Lower leg skin (tissue), 4 donors: ENCODE measurements at regions of chr12 and their contacts with region 1.

Region 1: DNA sequence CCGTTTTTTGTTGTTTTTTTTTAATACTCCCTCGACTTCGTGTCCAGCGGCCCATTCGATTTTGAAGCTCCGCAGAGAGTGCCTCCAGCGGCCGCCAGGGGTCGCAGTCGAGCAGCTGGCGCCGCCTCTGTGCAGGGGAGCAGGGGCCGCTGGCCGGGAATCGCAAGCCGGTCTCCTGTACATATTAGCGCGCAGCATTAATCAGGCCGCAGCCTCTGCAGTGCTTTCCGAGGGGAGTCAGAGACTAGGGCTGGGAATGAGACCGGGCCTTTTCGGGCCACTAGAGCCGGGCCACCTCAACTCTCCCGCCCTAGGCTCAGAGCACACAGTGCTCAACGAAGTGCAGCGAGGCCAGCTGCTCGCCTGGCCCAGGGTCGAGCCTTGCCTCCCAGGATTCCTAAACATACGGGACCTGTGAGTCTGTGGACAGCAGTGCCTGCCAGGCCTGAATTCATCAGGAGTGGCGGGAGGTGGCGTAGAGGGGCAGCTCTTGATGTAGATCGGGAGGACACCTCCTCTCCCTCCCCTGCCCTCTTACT is 81.8 kb downstream of the EMP1 start:
- DNase-seq: peak; percentile 30 to 92
- H3K4me3 ChIP-seq: no peak overlapping the region
- CTCF ChIP-seq: peak in 1 of 3 donors; percentile 80
- POLR2A ChIP-seq: no peak

Region 2: DNA sequence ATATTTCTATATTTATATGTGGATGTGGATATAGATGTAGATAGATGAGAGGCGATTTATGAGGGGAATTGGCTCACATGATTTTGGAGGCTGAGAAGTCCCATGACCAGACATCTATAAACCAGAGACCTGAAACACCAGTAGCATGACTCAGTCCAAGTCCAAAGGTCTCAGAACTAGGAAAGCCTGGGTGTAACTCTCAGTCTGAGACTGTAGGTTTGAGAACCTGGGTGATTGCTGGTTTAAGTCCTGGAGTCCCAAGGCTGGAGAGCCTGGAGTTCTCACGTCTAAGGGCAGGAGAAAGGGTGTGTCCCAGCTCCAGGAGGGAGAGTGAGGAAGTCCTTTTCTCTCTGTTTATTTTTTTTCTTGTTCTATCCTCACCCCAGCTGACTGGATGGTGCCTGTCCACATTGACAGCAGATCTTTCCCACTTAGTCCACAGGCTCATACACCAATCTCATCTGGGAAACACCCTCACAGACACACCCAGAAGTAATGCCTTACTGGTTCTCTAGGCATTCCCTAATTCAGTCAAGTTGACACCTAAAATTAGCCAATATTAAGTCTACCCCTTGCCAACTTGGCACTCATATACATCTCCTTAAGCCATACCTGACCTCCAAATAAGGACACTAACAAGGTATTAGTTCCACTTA is 36.4 kb before region 1 on chr12:
- intact Hi-C with region 1: no loop called
- DNase-seq: no peak
- H3K4me3 ChIP-seq: no peak overlapping the region
- CTCF ChIP-seq: no peak
- POLR2A ChIP-seq: no peak

Region 3: GRCh38 chr12:13534645-13535398 is 256.5 kb after region 1 on chr12:
- intact Hi-C with region 1: loop called (anchors 10 kb)
- DNase-seq: peak; percentile 37 to 92
- H3K4me3 ChIP-seq: no peak overlapping the region
- CTCF ChIP-seq: peak in 1 of 3 donors; percentile 17
- POLR2A ChIP-seq: no peak

Region 4: DNA sequence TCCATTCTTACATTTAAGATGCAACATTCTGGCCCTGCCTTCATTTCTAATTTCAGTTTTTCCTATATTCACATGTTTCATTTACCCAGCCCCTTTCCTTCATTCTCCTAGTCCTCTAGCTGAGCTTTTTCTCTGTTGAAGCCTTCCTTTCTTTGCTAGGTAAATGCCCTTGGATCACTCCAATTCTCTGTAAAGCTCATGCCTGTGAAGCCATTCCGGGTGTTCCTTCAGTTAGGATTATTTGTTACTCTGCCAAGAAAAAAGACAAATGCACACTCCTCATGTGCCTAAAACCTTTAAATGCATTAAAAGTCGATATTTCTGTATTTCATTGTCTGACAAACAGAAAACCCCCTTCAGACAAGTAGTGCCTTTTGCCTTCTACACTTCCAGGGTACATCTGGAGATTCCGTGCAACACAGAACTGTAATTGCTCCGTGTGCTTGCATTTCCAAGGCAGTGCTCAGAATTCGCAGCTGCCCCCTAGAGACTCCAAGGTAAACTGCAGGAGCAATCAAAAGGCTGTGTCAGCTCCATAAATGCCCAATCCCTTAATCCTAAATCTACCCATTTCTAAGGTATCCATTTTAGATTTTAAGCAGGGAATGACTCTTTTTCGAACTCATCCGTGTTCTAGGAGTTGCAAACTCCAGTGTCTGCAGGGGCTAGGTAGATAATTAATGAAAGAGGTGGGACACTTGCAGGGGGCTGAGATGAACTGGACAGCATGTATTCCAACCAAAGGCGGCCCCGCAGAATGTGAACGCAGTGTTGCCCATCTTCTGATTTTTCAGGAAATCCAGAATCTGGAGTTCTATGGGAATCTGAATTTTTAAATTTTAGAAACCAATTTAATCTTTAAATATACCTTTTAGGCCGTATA is 382.9 kb after region 1 on chr12:
- intact Hi-C with region 1: loop called (anchors 10 kb)
- DNase-seq: peak in 1 of 2 donors; percentile 21
- H3K4me3 ChIP-seq: no peak overlapping the region
- CTCF ChIP-seq: no peak
- POLR2A ChIP-seq: no peak